Kidney (tissue), 22 donors: ENCODE measurements at regions of chr1 and their contacts with region 1.

Region 1: DNA sequence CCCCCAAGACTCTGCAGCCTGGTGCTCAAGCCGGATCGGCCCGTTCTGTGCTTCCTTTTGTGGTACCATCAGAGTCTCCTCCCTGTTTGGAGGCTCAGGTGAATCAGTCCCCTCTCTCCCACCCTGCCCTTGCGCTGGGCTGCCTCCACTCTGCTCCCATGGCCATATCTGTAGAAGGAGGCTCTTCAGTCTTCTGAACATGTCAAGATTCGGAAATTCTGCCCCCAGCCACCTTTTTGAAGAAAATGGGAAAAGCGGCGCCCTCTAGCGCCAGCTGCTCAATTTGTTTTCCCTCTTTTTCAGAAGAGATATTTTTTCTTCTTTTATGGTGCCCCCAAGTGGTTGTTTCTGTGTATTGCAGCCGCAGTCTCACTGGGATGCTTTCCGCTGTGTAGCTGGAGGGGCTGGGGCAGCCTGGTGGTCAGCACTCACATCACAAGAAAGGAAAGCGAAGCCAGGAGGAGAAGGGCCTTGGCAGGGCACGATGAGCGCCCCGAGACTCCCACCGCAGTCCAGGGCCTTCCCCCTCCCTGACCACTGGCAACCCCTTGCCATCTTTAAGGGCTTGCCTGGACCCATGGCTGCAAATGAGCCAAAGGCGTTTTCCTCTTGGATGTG is 58.4 kb upstream of the CACNA1E start:
- DNase-seq: peak; percentile 73 to 91 (median 88)
- H3K4me3 ChIP-seq: no peak overlapping the region
- H3K27ac ChIP-seq: no peak overlapping the region
- H3K4me1 ChIP-seq: peaks cover 0 to 2% (median 0%) of the 10 kb centered on the region in 3 donors
- H3K27me3 ChIP-seq: no peaks in the 10 kb centered on the region
- CTCF ChIP-seq: peak; percentile 95

Region 2: GRCh38 chr1:181189691-181190363 is 235.1 kb before region 1 on chr1:
- intact Hi-C with region 1: loop called (anchors 5 kb)
- DNase-seq: peak; percentile 70 to 84 (median 77)
- H3K4me3 ChIP-seq: no peak overlapping the region
- H3K27ac ChIP-seq: no peak overlapping the region
- H3K4me1 ChIP-seq: no peaks in the 10 kb centered on the region
- H3K27me3 ChIP-seq: no peaks in the 10 kb centered on the region
- CTCF ChIP-seq: peak; percentile 99

Region 3: DNA sequence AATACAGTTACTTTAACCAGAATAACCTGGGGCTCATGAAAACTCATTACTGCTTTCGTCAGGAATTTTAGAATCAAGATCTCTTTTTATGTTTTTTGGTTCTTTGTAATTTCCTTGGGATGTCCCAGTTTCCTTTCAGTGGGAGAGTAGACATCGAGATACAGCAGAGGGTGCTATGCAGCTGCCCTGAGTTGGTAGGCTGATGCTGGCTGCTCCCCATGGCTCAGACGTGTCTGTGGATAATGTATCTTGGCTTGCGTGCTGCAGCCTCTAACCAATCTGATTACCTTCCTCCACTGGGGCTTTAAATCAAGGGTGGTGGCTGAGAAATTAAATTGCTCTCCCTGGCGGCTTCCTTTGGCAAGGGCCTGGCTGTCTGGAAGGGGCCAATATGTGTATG is 312.2 kb after region 1 on chr1:
- intact Hi-C with region 1: no loop called
- DNase-seq: peak in 1 of 5 donors; percentile 3
- H3K4me3 ChIP-seq: no peak overlapping the region
- H3K27ac ChIP-seq: no peak overlapping the region
- H3K4me1 ChIP-seq: no peaks in the 10 kb centered on the region
- H3K27me3 ChIP-seq: no peaks in the 10 kb centered on the region
- CTCF ChIP-seq: peak; percentile 26